Posterior vena cava (tissue), 2 donors: ENCODE measurements at regions of chr7 and their contacts with region 1.

Region 1: GRCh38 chr7:128830231-128831177 is at the start of gene FLNC:
- DNase-seq: no peak
- total RNA-seq, gene FLNC: 440 to 856 TPM

Region 2: GRCh38 chr7:128739048-128739962 is 91.2 kb before region 1 on chr7 and contains the start of gene CALU:
- intact Hi-C with region 1: loop called in 1 of 2 experiments (anchors 2 kb)
- DNase-seq: peak; percentile 99
- total RNA-seq, gene CALU: 262 to 393 TPM

Region 3: DNA sequence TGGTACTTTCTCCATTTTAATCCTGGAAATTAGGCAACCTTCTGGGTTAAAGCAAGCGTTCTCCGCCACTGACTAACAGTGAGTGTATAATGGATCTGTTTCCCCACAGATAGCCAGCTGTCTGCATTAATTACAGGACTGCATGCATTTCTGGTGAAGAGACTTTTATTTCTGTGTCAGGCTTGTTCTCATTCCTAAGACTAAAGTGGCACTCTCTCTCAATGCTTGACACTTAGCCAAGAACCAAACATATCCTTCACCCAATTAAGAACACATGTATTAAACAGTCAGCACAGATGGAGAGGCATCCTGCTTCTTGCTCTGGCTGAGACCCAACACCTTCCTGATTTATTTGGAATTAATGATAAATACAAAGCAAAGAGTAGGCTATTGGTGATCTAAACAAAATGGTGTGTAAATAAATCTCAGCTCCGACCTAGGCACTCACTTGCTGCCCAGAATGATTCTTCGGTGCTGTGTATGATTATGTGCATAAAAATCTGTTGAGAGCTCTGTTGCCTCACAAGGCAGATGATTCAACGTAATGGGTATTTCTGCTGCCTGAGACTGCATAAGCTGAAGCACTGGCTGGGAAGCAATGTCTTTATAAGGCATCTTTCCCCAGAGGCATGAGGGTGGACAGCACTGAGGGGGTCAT is 74.6 kb before region 1 on chr7:
- intact Hi-C with region 1: loop called in 1 of 2 experiments (anchors 5 kb)
- DNase-seq: no peak

Region 4: GRCh38 chr7:128783143-128783861 is 47.2 kb before region 1 on chr7:
- intact Hi-C with region 1: loop called in 1 of 2 experiments (anchors 5 kb)
- DNase-seq: peak; percentile 95

Region 5: DNA sequence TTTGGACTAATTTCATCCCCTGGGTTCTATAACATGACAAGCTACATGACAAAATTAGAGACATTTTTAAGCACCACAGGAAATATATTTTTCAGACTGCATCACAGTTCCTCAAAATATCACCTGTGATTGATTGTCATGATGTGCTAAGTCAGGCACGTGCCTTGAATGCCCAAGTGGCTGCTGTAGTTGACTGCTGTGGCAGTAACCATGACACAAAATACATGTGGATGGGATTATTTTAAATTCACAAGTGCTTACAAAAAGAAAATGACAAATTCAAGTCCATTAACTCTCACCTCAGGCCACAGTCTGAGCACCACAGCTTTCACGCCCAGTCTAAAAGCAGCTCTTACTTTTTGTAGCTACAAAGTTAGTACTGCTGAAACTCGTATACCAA is 178.9 kb after region 1 on chr7:
- intact Hi-C with region 1: no loop called
- DNase-seq: no peak